BJ (cell line): ENCODE measurements at regions of chr14 and their contacts with region 1.

Region 1: DNA sequence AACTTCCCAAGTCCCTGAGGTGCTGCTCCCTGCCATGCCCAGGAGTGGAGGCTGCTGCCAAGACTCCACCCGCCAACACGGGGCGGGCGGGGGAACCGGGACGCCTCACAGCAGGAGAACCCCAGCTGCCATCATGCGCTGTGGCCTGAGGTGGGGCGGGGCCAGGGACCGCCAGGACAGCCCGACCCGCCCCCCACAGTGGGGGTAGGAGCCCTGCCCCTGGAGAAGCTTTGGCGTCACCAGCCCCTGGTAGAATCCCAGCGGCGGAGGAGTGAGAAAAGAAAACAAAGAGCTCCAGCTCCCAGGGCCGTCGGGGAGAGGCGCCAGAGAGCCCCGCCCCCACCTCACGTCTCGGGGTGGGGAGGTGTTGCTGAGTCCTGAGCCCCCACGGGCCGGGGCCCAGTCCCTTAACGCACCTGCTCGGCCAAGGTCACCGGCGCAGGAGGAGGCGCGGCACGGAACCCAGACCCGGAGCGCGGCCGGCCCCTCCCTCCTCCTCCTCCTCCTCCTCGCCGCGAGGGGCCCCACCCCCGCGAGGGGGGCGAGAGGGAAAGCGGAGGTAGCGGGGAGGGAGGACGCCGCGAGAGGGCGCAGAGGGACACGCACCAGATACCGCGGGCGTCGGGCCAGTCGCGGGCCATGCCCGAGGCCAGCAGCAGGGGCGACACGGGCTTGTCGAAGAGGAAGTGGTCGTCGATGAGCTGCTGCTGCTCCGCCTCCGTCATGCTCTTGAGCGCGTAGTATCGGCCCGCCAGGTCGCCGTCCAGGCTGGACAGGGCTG is 1.8 kb downstream of the CKB start:
- DNase-seq: no peak
- H3K4me3 ChIP-seq: peak overlapping the region; percentile 56
- H3K27me3 ChIP-seq: peaks cover 1% of the 10 kb centered on the region; the same call in 1 of the 2 replicates
- CTCF ChIP-seq: peak; percentile 68

Region 2: GRCh38 chr14:103500148-103500990 is 20.5 kb before region 1 on chr14:
- CTCF ChIA-PET with region 1: interaction called, 12 read pairs
- POLR2A ChIA-PET with region 1: no interaction called
- DNase-seq: no peak
- H3K4me3 ChIP-seq: no peak overlapping the region
- H3K27me3 ChIP-seq: no peaks in the 10 kb centered on the region
- CTCF ChIP-seq: peak; percentile 97

Region 3: GRCh38 chr14:103510311-103511021 is 10.4 kb before region 1 on chr14:
- CTCF ChIA-PET with region 1: interaction called, 12 read pairs
- POLR2A ChIA-PET with region 1: no interaction called
- DNase-seq: no peak
- H3K4me3 ChIP-seq: no peak overlapping the region
- H3K27me3 ChIP-seq: no peaks in the 10 kb centered on the region
- CTCF ChIP-seq: no peak

Region 4: GRCh38 chr14:103534576-103535061 is 13.8 kb after region 1 on chr14:
- CTCF ChIA-PET with region 1: interaction called, 17 read pairs
- POLR2A ChIA-PET with region 1: no interaction called
- DNase-seq: no peak
- H3K4me3 ChIP-seq: no peak overlapping the region
- H3K27me3 ChIP-seq: no peaks in the 10 kb centered on the region
- CTCF ChIP-seq: no peak

Region 5: DNA sequence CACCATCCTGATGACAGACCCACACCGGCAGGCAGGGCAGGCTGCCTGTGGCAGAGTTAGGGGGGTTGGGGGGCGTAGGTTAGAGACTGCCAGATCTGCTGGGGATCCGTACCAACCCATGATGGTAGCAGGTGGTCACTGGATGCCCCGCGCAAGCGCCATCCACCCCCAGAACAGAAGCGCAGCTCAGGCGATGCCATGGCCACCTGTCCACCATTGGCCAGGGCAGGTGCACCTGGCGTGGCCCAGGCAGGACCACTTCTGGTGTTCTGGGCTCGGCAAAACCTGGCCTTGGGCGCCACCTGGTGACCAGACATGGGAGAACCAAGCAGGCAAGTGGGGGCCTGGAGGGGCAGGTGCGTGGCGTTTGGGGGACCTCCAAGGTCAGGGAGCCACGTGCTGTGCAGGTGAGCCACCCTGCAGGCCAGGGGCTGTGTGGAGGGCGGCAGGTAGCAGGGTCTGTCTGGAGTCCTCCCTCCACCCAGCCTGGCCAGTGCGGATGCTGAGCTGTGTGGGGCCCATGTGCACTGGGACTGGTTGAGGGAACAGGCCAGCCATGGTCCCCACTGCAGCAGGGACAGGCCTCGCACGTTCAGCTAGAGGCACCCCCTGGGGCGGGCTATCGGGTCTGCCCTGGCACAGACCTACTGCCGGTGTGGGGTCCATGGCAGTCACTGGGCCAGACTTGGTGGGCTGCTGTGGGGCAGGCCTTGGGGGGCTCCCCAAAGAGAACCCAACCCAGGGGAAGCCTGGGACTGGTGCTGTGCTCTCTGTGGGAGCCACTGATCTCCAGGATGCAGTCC is 26.0 kb after region 1 on chr14:
- CTCF ChIA-PET with region 1: interaction called, 228 read pairs
- POLR2A ChIA-PET with region 1: no interaction called
- DNase-seq: no peak
- H3K4me3 ChIP-seq: no peak overlapping the region
- H3K27me3 ChIP-seq: no peaks in the 10 kb centered on the region
- CTCF ChIP-seq: peak; percentile 88

Region 6: DNA sequence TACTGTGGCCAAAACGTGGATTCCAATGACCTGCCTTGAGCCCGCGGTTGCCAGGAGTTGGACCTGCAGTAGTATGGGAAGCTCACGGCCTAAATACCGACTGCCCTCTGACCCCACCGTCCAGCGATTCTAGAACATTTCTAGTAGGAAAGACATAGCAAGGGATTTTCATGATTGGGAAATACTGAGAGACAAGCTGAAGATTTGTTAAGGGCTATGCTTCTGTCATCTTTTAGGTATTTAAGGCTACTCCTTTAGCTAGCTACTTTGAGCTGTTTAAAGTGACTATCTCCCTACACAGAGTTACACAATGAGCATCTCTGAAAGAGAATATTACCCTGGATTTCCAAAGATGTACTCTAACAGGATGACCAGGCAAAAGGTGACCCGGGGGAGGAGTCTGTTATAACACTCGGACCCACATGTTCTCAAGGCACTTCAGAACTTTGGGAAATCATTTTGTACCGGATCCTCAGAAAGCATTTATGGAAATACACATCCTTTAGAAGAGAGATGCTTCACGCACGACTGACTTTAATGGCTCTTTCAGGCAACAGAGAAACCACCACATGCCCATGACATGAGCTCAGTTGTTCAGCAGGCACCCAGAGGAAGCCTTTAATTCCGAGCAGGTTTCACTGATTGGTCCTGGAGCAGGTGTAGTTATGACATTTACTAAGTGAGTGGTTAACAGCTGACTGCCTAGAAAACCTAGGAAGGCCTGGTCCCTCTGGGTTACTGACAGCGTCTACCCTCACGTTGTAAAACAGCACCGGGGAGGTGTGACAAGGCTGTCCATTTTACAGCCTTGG is 37.4 kb after region 1 on chr14:
- CTCF ChIA-PET with region 1: interaction called, 228 read pairs
- POLR2A ChIA-PET with region 1: no interaction called
- DNase-seq: no peak
- H3K4me3 ChIP-seq: no peak overlapping the region
- H3K27me3 ChIP-seq: no peaks in the 10 kb centered on the region
- CTCF ChIP-seq: no peak